A549 (cell line): ENCODE measurements at regions of chr2 and their contacts with region 1.

Region 1: GRCh38 chr2:207632575-207633493 is 7.6 kb upstream of the METTL21A start:
- DNase-seq: peak; percentile 44 to 89
- ATAC-seq: peak; percentile 93 to 96
- H3K4me3 ChIP-seq: peak overlapping the region; percentile 21; the same call in 1 of the 3 replicates
- H3K27ac ChIP-seq: peak overlapping the region; percentile 89 to 94
- H3K4me1 ChIP-seq: peaks cover 53% of the 10 kb centered on the region
- CTCF ChIP-seq: no peak
- EP300 ChIP-seq: peak; percentile 7 to 58; a peak in 3 of 5 replicates
- POLR2A ChIP-seq: no peak
- RAD21 ChIP-seq: peak in 1 of 2 experiments; percentile 15; a peak in 2 of 5 replicates

Region 2: GRCh38 chr2:207584952-207585351 is 47.9 kb before region 1 on chr2:
- CTCF ChIA-PET with region 1: no interaction called
- POLR2A ChIA-PET with region 1: no interaction called
- DNase-seq: no peak
- ATAC-seq: no peak
- H3K4me3 ChIP-seq: no peak overlapping the region
- H3K27ac ChIP-seq: no peak overlapping the region
- H3K4me1 ChIP-seq: no peaks in the 10 kb centered on the region
- CTCF ChIP-seq: no peak
- EP300 ChIP-seq: no peak
- POLR2A ChIP-seq: no peak
- RAD21 ChIP-seq: no peak

Region 3: DNA sequence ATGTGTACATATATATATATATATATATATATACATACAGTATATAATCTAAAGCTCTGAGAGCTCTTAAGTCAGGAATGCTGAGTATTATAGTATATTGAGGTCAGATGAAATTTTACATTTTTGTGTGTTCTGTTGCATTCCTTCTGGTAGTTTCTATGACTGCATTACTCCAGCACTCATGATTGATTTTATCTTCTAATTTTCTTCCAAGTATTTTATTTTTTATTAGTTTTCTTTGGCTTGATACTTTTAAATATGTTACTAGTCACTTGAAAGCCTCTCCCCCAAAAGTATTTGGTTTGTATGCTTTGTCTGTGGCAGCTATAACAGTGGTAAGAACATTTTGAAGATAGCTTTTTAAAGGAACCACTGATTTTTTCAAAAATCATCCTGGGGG is 32.6 kb before region 1 on chr2:
- CTCF ChIA-PET with region 1: no interaction called
- POLR2A ChIA-PET with region 1: no interaction called
- DNase-seq: no peak
- ATAC-seq: no peak
- H3K4me3 ChIP-seq: no peak overlapping the region
- H3K27ac ChIP-seq: no peak overlapping the region
- H3K4me1 ChIP-seq: no peaks in the 10 kb centered on the region
- CTCF ChIP-seq: no peak
- EP300 ChIP-seq: no peak
- POLR2A ChIP-seq: no peak
- RAD21 ChIP-seq: no peak

Region 4: DNA sequence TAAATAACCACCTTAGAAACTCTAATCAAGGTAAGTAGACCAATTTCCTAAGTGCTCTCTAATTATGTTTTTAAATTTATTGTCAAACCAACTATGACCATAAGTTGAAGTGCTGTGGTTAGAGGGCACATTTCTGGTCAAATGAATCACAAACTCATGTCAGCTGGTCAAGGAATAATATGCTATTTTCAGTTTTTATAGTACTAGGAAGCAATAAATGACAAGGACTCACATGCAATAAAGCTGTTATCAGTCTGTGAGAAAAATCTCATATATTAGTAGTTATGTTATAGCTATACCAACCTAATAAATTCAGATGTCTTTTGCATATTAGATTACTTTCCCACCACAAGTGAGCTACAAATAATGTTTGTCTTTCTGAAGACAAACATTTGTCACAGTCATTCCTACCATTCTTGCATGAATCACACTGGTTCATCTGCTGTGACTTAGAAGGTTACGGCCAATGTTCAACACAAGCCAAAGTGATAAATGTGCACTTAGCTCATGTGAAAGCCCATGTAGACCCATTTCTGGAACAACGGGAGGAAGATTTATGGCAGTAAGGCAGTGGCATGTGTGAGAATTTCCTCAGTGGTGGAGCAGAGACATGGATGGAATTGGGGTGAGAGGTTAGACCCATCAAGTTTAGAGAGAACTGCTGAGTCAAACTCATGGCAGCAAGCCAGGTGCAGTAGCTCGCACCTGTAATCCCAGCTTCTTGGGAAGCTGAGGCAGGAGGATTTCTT is 51.2 kb after region 1 on chr2:
- CTCF ChIA-PET with region 1: interaction called, 5 read pairs
- POLR2A ChIA-PET with region 1: interaction called, 10 read pairs
- DNase-seq: peak; percentile 60 to 96
- ATAC-seq: peak; percentile 96
- H3K4me3 ChIP-seq: no peak overlapping the region
- H3K27ac ChIP-seq: peak overlapping the region; percentile 82 to 92
- H3K4me1 ChIP-seq: peaks cover 32% of the 10 kb centered on the region
- CTCF ChIP-seq: no peak
- EP300 ChIP-seq: peak; percentile 48 to 75; a peak in 3 of 5 replicates
- POLR2A ChIP-seq: no peak
- RAD21 ChIP-seq: no peak

Region 5: DNA sequence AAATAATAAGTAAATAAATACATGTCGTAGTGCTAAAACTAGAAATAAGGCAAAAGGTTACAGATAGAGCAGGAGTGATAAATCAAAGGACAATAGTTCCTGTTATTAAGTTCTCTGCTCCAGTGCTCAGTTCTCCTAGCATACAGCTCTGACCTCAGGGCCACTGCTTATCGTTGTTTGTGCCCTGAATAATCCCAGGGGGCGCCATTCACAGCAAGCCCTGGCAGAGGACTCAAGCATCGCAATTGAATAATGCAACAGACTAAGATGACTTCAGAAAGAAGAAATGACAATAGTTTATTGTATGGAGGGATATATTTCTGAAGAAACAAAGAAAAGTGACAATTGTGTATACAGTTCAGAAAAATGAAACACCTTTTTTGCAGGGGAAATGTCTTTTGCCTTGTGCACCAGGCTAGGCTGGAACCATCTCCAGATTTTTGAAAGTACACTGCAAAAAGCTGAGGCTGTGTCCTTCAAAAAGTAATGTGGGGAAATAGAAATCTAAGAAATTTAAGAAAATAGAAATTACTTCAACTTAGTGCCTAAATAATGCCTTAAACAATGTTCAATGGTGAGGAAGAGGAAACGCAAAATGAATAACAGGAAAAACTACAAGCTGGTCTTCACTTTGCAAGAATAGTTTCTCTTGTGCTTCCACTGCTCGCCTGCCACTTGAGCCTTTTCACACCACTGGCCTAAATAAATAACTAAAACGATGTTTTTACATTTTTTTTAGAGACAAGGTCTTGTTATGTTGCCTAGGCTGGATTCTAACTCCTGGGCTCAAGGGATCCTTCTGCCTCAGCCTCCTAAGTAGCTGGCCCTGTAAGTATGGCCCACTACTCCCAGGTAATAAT is 59.6 kb after region 1 on chr2:
- CTCF ChIA-PET with region 1: interaction called, 21 read pairs
- POLR2A ChIA-PET with region 1: no interaction called
- DNase-seq: peak; percentile 50 to 74
- ATAC-seq: peak; percentile 71 to 89; a peak in 5 of 6 replicates
- H3K4me3 ChIP-seq: no peak overlapping the region
- H3K27ac ChIP-seq: peak overlapping the region in 1 of 2 experiments; percentile 12; a peak in 1 of 6 replicates
- H3K4me1 ChIP-seq: peaks cover 20% of the 10 kb centered on the region
- CTCF ChIP-seq: peak; percentile 58
- EP300 ChIP-seq: no peak
- POLR2A ChIP-seq: no peak
- RAD21 ChIP-seq: peak; percentile 32 to 63; a peak in 4 of 5 replicates